Endothelial cell of umbilical vein (primary cell): ENCODE measurements at regions of chr14 and their contacts with region 1.

Region 1: GRCh38 chr14:23120541-23121251 is 1.6 kb upstream of the CEBPE start:
- DNase-seq: peak; percentile 89
- H3K4me3 ChIP-seq: no peak overlapping the region
- H3K27ac ChIP-seq: peak overlapping the region; percentile 81
- H3K4me1 ChIP-seq: peaks cover 21% of the 10 kb centered on the region
- H3K27me3 ChIP-seq: no peaks in the 10 kb centered on the region
- CTCF ChIP-seq: peak; percentile 100
- POLR2A ChIP-seq: no peak

Region 2: GRCh38 chr14:22653012-22653621 is 467.6 kb before region 1 on chr14:
- CTCF ChIA-PET with region 1: no interaction called
- POLR2A ChIA-PET with region 1: no interaction called
- dilution Hi-C with region 1: no loop called
- intact Hi-C with region 1: no loop called
- DNase-seq: peak; percentile 75
- H3K4me3 ChIP-seq: no peak overlapping the region
- H3K27ac ChIP-seq: peak overlapping the region; percentile 29
- H3K4me1 ChIP-seq: peaks cover 19% of the 10 kb centered on the region
- H3K27me3 ChIP-seq: no peaks in the 10 kb centered on the region
- CTCF ChIP-seq: peak; percentile 89 to 95
- POLR2A ChIP-seq: no peak

Region 3: GRCh38 chr14:22908601-22909000 is 212.1 kb before region 1 on chr14:
- CTCF ChIA-PET with region 1: no interaction called
- POLR2A ChIA-PET with region 1: no interaction called
- dilution Hi-C with region 1: no loop called
- intact Hi-C with region 1: no loop called
- DNase-seq: no peak
- H3K4me3 ChIP-seq: no peak overlapping the region
- H3K27ac ChIP-seq: no peak overlapping the region
- H3K4me1 ChIP-seq: no peaks in the 10 kb centered on the region
- H3K27me3 ChIP-seq: no peaks in the 10 kb centered on the region
- CTCF ChIP-seq: no peak
- POLR2A ChIP-seq: no peak

Region 4: GRCh38 chr14:23068476-23069412 is 52.0 kb before region 1 on chr14:
- CTCF ChIA-PET with region 1: interaction called, 32 read pairs
- POLR2A ChIA-PET with region 1: interaction called, 3 read pairs
- dilution Hi-C with region 1: no loop called
- intact Hi-C with region 1: no loop called
- DNase-seq: peak; percentile 97
- H3K4me3 ChIP-seq: no peak overlapping the region
- H3K27ac ChIP-seq: peak overlapping the region; percentile 35
- H3K4me1 ChIP-seq: peaks cover 28% of the 10 kb centered on the region
- H3K27me3 ChIP-seq: no peaks in the 10 kb centered on the region
- CTCF ChIP-seq: peak; percentile 93 to 100
- POLR2A ChIP-seq: no peak

Region 5: GRCh38 chr14:23130871-23131270 is 10.2 kb after region 1 on chr14:
- CTCF ChIA-PET with region 1: interaction called, 70 read pairs
- POLR2A ChIA-PET with region 1: no interaction called
- dilution Hi-C with region 1: no loop called
- intact Hi-C with region 1: no loop called
- DNase-seq: peak; percentile 28
- H3K4me3 ChIP-seq: no peak overlapping the region
- H3K27ac ChIP-seq: no peak overlapping the region
- H3K4me1 ChIP-seq: peaks cover 24% of the 10 kb centered on the region
- H3K27me3 ChIP-seq: no peaks in the 10 kb centered on the region
- CTCF ChIP-seq: no peak
- POLR2A ChIP-seq: no peak

Region 6: GRCh38 chr14:23160924-23161538 is 40.3 kb after region 1 on chr14:
- CTCF ChIA-PET with region 1: interaction called, 34 read pairs
- POLR2A ChIA-PET with region 1: no interaction called
- dilution Hi-C with region 1: no loop called
- intact Hi-C with region 1: no loop called
- DNase-seq: no peak
- H3K4me3 ChIP-seq: no peak overlapping the region
- H3K27ac ChIP-seq: no peak overlapping the region
- H3K4me1 ChIP-seq: no peaks in the 10 kb centered on the region
- H3K27me3 ChIP-seq: no peaks in the 10 kb centered on the region
- CTCF ChIP-seq: no peak
- POLR2A ChIP-seq: no peak

Region 7: GRCh38 chr14:23208324-23208723 is 87.6 kb after region 1 on chr14:
- CTCF ChIA-PET with region 1: interaction called, 35 read pairs
- POLR2A ChIA-PET with region 1: no interaction called
- dilution Hi-C with region 1: no loop called
- intact Hi-C with region 1: no loop called
- DNase-seq: no peak
- H3K4me3 ChIP-seq: no peak overlapping the region
- H3K27ac ChIP-seq: no peak overlapping the region
- H3K4me1 ChIP-seq: no peaks in the 10 kb centered on the region
- H3K27me3 ChIP-seq: peaks cover 5 to 11% of the 10 kb centered on the region in 2 experiments
- CTCF ChIP-seq: no peak
- POLR2A ChIP-seq: no peak

Region 8: GRCh38 chr14:23294734-23295561 is 174.3 kb after region 1 on chr14:
- CTCF ChIA-PET with region 1: interaction called, 53 read pairs
- POLR2A ChIA-PET with region 1: no interaction called
- dilution Hi-C with region 1: no loop called
- intact Hi-C with region 1: no loop called
- DNase-seq: peak; percentile 55
- H3K4me3 ChIP-seq: no peak overlapping the region
- H3K27ac ChIP-seq: no peak overlapping the region
- H3K4me1 ChIP-seq: peaks cover under 1% of the 10 kb centered on the region
- H3K27me3 ChIP-seq: peaks cover 6% of the 10 kb centered on the region in 2 experiments
- CTCF ChIP-seq: peak; percentile 85 to 87
- POLR2A ChIP-seq: no peak